OCI-LY7 (cell line): ENCODE measurements at regions of chr2 and their contacts with region 1.

Region 1: DNA sequence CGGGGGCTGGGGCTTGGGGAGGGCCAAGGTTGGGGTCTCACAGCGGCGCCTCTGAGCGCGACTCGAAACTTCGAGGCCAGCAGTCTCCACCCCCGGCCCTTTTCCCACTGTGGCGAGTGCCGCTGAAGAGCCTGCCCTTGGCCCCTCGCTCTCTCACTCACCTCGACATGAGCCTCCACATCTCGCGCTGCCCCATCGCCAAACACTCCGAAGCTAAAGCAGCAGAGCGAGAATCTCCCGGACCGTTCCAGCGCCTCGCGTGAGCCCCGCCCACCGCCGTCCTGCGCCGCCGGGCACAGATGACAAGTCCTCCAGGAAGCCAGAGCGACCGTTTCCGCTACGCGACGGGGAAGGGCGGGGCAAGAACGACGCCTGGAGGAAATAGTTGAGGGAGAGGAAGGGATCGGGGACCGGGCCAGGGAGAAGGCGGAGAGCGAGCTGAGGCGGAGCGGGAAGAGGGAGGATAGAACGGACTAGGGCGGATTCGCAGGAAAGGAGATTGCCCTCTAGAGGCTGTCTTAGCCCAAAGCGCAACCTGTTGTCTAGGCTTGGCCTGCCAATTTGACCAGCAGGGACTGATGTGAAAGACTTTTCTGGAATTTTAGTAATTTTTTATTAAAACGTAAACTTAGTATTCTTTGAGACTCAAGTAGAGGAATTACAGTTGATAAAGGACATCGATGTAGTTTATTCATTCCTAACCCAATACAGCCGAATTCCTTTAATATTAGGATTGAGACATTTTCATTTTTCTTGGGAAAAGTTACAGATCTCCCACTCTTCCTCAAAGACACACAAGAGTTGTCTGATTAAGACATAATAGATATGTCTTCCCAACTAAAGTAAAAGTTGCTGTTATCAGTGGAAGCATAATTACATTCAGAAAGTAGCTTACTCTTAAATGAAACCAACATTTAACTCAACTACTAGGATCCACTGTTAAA is at the start of gene HIBCH:
- DNase-seq: peak; percentile 92
- H3K4me3 ChIP-seq: peak within 1 kb of the TSS; percentile 74
- H3K27ac ChIP-seq: peak within 1 kb of the TSS; percentile 62
- H3K4me1 ChIP-seq: peaks cover 28% of the 10 kb centered on the region
- CTCF ChIP-seq: peak; percentile 78
- total RNA-seq, gene HIBCH: 15.6 and 17.1 TPM in 2 replicates

Region 2: GRCh38 chr2:189661148-189661956 is 658.5 kb before region 1 on chr2 and contains the start of gene ASNSD1:
- CTCF ChIA-PET with region 1: no interaction called
- POLR2A ChIA-PET with region 1: no interaction called
- intact Hi-C with region 1: loop called (anchors 5 kb)
- DNase-seq: peak; percentile 100
- H3K4me3 ChIP-seq: peak within 1 kb of the TSS; percentile 90
- H3K27ac ChIP-seq: peak within 1 kb of the TSS; percentile 38
- H3K4me1 ChIP-seq: peaks cover 41% of the 10 kb centered on the region
- CTCF ChIP-seq: peak; percentile 99
- total RNA-seq, gene ASNSD1: 36.3 and 36.8 TPM in 2 replicates

Region 3: GRCh38 chr2:190088917-190089316 is 230.9 kb before region 1 on chr2:
- CTCF ChIA-PET with region 1: no interaction called
- POLR2A ChIA-PET with region 1: no interaction called
- intact Hi-C with region 1: loop called (anchors 2 kb)
- DNase-seq: peak; percentile 74
- H3K4me3 ChIP-seq: no peak overlapping the region
- H3K27ac ChIP-seq: no peak overlapping the region
- H3K4me1 ChIP-seq: no peaks in the 10 kb centered on the region
- CTCF ChIP-seq: peak; percentile 93

Region 4: GRCh38 chr2:190221429-190221828 is 98.4 kb before region 1 on chr2:
- CTCF ChIA-PET with region 1: no interaction called
- POLR2A ChIA-PET with region 1: interaction called, 10 read pairs
- intact Hi-C with region 1: no loop called
- DNase-seq: no peak
- H3K4me3 ChIP-seq: no peak overlapping the region
- H3K27ac ChIP-seq: no peak overlapping the region
- H3K4me1 ChIP-seq: peaks cover 4% of the 10 kb centered on the region
- CTCF ChIP-seq: no peak

Region 5: GRCh38 chr2:190486037-190486623 is 166.3 kb after region 1 on chr2:
- CTCF ChIA-PET with region 1: no interaction called
- POLR2A ChIA-PET with region 1: no interaction called
- intact Hi-C with region 1: no loop called
- DNase-seq: no peak
- H3K4me3 ChIP-seq: no peak overlapping the region
- H3K27ac ChIP-seq: no peak overlapping the region
- H3K4me1 ChIP-seq: no peaks in the 10 kb centered on the region
- CTCF ChIP-seq: no peak